ENCODE measurements at regions of chrX and their contacts with region 1.

Region 1: GRCh38 chrX:70289793-70290776 is at the starts of genes KIF4A and PDZD11:
- DNase-seq: peak; percentile 95
- total RNA-seq, gene KIF4A: 0.10 to 0.37 TPM
- total RNA-seq, gene PDZD11: 22.9 to 27.0 TPM

Region 2: GRCh38 chrX:68504237-68504636 is 1785.8 kb before region 1 on chrX:
- intact Hi-C with region 1: loop called in 1 of 2 experiments (anchors 10 kb)
- DNase-seq: no peak

Region 3: DNA sequence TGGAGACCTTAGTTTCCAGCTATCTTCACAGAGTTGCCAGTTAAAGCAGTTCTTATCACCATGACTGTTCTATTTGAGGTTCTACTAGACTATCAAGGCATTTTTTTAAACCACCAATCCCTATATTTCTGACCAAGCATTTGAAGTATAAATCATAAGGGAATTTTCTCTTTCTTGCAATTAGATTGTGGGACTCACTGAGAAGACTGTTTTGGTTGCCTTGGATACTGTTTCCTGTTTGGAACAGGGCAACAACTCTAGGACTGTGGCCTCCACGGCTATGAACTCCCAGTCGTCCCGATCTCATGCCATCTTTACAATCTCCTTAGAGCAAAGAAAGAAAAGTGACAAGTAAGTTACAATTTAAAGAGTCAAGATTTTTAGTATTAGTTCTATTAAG is 11.6 kb after region 1 on chrX:
- intact Hi-C with region 1: no loop called
- DNase-seq: no peak

Region 4: DNA sequence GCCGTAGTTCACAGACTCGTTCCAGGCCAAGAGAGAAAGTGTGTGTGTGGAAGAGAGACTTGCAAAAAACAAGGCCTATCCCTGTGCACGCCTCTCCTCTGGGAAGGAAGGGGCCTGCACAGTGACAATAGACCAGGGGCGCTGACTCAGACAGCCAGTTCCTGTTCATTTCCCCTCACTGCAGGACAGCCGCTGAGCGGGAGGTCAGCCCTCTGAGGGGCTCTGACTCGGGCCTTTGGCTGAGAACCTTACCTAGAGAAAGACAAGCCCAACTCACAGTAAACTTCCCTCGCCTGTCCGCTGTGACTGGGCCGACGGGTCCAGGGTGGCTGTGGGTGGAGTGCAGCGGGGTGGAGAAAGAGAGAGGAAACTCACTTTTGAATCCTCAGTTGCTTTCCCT is 1789.5 kb after region 1 on chrX:
- intact Hi-C with region 1: no loop called
- DNase-seq: no peak

Measured in posterior vena cava (tissue), 2 donors.